ENCODE measurements at regions of chr2 and their contacts with region 1.

Region 1: GRCh38 chr2:35963824-35964223 is 391.8 kb upstream of the CRIM1 start:
- DNase-seq: no peak
- H3K4me3 ChIP-seq: no peak overlapping the region
- H3K27ac ChIP-seq: no peak overlapping the region
- H3K4me1 ChIP-seq: no peaks in the 10 kb centered on the region
- H3K27me3 ChIP-seq: no peaks in the 10 kb centered on the region
- CTCF ChIP-seq: no peak

Region 2: GRCh38 chr2:36322108-36322507 is 358.3 kb after region 1 on chr2:
- intact Hi-C with region 1: loop called (anchors 10 kb)
- DNase-seq: no peak
- H3K4me3 ChIP-seq: no peak overlapping the region
- H3K27ac ChIP-seq: no peak overlapping the region
- H3K4me1 ChIP-seq: no peaks in the 10 kb centered on the region
- H3K27me3 ChIP-seq: no peaks in the 10 kb centered on the region
- CTCF ChIP-seq: peak; percentile 10

Region 3: GRCh38 chr2:37376421-37377186 is 1412.8 kb after region 1 on chr2:
- intact Hi-C with region 1: no loop called
- DNase-seq: no peak
- H3K4me3 ChIP-seq: no peak overlapping the region
- H3K27ac ChIP-seq: no peak overlapping the region
- H3K4me1 ChIP-seq: no peaks in the 10 kb centered on the region
- H3K27me3 ChIP-seq: no peaks in the 10 kb centered on the region
- CTCF ChIP-seq: no peak

Measured in colonic mucosa (tissue), 4 donors.